AG04450 (cell line): ENCODE measurements at regions of chr3 and their contacts with region 1.

Region 1: DNA sequence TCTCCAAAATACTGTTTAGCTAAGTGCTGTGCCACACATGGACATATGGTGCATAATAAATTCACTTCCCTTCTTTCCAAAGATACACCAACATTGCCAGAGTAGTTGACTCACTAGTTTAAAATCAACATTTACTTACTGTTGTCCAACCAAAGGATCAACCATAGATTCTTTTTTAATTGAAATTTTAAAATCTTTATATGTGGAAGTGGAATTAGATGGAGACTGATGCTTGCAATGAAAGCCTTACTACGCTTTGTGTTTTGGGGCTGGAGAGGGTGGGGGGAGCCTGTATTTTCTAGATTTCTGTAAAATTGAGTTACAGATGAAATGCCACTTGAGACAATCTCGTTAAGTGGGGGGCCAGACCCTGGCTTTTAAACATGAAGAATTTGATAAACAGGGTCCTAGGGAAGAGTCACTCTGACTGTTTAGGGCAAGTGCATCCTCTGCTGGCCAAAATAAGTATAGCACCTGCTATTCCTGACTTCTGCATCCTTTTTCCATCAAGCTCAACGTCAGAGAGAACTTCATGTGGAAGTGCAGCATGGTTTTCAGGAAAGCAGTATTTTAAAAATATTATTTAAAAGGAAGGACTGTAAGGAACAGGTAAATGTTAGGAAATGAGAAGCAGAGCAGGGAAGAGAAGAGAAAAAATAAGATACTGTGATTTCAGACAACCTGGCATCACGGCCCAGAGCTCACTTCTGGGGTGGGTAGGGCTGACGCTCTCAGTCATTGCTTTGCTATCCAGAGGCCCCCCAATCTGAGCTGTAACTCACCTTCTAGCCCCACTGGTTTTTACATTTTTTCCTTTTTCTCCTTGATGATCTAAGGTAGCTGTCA is 76.7 kb downstream of the BOC start:
- DNase-seq: peak; percentile 53
- H3K4me3 ChIP-seq: no peak overlapping the region
- H3K27ac ChIP-seq: no peak overlapping the region
- H3K27me3 ChIP-seq: no peaks in the 10 kb centered on the region
- CTCF ChIP-seq: peak; percentile 100

Region 2: DNA sequence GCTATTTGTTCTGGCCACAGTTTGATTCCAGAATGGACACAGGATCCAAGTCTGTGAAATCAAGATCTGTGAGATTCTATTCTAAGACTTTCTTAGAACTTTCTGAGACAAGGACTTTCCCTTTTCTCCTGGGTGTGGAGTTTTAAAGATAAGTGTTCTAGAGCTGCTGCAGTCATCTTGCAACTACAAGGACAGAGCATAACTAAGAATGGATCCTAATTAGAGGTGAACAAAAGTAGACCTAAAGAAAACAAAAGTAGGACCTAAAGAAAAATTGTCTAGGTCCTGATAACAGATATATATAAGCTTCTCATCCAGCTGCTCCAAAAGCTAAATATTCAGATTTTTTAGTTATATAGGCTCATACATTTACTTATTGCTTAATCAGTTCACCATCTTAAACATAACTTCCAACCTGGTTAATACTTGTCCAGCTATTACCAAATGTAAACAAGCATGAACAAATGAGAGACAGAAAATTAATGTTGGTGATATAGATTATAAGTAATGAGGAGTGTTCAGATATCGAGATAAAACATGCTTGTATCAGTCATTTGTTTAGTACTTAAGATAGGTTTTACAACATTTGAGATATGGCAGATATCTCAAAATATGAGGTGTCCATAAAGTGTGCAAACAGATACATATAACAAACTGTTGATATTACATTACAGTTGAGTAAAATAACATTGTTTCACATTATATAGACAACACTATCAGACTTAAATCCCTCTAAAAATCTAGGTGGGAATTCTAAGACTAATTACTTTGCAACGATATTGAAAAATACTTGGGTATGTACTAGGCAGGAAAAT is 879.9 kb before region 1 on chr3:
- CTCF ChIA-PET with region 1: no interaction called
- POLR2A ChIA-PET with region 1: no interaction called
- DNase-seq: no peak
- H3K4me3 ChIP-seq: no peak overlapping the region
- H3K27ac ChIP-seq: no peak overlapping the region
- H3K27me3 ChIP-seq: no peaks in the 10 kb centered on the region
- CTCF ChIP-seq: no peak

Region 3: DNA sequence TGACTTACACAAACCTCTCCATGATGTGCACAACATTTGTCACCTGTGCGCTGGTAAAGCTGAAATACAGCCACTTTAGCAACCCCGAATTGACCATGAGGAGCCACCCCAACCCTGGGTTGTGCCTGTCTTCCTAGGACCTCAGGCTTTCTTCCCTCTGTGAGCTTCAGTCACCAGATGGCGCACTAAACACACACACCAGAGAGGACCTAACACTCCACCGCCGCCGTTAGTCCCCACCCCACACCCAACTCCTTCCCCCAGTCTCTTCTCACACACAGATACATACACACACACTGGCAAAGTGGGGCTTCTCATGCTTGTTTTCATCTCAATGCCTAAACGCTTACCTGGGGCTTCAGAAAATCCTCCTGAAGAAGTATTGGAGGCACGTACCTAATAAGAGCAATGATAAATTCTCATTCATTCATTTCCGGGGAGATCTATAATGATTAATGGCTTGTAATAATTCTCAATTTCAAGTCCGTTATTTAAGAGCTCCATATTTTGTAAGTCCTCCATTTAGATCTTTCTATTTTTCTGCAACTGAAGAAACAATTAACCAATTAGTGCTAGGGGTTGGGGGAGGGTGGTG is 645.0 kb before region 1 on chr3:
- CTCF ChIA-PET with region 1: interaction called, 16 read pairs
- POLR2A ChIA-PET with region 1: no interaction called
- DNase-seq: peak; percentile 86
- H3K4me3 ChIP-seq: peak overlapping the region; percentile 28
- H3K27ac ChIP-seq: no peak overlapping the region
- H3K27me3 ChIP-seq: no peaks in the 10 kb centered on the region
- CTCF ChIP-seq: peak; percentile 96

Region 4: GRCh38 chr3:113035387-113035982 is 252.5 kb before region 1 on chr3:
- CTCF ChIA-PET with region 1: interaction called, 32 read pairs
- POLR2A ChIA-PET with region 1: no interaction called
- DNase-seq: no peak
- H3K4me3 ChIP-seq: no peak overlapping the region
- H3K27ac ChIP-seq: no peak overlapping the region
- H3K27me3 ChIP-seq: no peaks in the 10 kb centered on the region
- CTCF ChIP-seq: peak; percentile 94

Region 5: DNA sequence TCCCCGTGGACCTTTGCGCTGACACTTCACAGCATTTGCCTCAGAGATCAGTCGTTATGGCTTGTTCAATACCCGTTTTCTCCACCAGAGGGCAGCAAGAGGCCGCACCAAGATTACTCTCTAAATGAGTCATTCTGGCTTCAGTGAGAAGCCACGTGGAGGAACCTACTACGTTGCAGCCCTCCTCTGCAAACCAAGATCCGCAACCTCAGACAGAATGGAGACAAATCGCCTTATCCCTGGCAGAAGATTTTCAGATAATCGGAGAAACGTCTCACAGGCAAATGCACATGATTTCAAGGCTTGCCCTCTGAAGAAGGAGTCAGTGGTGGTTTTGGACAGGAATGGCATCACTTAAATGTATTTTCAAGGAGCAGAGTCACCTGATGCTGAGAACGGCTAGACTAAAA is 236.7 kb before region 1 on chr3:
- CTCF ChIA-PET with region 1: interaction called, 78 read pairs
- POLR2A ChIA-PET with region 1: interaction called, 4 read pairs
- DNase-seq: peak; percentile 53
- H3K4me3 ChIP-seq: no peak overlapping the region
- H3K27ac ChIP-seq: no peak overlapping the region
- H3K27me3 ChIP-seq: no peaks in the 10 kb centered on the region
- CTCF ChIP-seq: peak; percentile 83

Region 6: GRCh38 chr3:113136071-113136470 is 152.0 kb before region 1 on chr3:
- CTCF ChIA-PET with region 1: interaction called, 39 read pairs
- POLR2A ChIA-PET with region 1: no interaction called
- DNase-seq: no peak
- H3K4me3 ChIP-seq: no peak overlapping the region
- H3K27ac ChIP-seq: no peak overlapping the region
- H3K27me3 ChIP-seq: no peaks in the 10 kb centered on the region
- CTCF ChIP-seq: peak; percentile 51

Region 7: GRCh38 chr3:113275929-113276750 is 11.9 kb before region 1 on chr3:
- CTCF ChIA-PET with region 1: interaction called, 11 read pairs
- POLR2A ChIA-PET with region 1: no interaction called
- DNase-seq: no peak
- H3K4me3 ChIP-seq: peak overlapping the region; percentile 45
- H3K27ac ChIP-seq: peak overlapping the region; percentile 61
- H3K27me3 ChIP-seq: no peaks in the 10 kb centered on the region
- CTCF ChIP-seq: 0 out of 2 replicates have a peak, but pooled peaks have one; percentile 25

Region 8: DNA sequence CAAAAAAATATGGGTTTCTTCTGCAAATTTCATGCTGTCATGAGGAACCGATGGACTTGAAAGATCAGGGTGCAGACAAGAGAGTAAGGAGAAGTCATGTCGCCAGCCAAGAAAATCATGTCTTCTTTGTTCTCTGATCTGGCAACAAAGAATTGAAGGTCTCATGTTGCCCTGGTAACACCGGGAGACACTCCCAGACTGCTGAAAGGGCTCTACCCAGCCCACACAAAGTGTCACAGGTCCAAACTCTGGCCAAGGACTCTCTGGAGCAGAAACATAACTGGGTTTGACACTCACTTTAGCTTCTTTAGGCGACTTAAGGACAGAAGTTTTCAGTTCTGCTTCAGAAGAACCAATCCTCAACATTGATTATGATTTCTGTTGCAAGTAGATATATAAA is 287.2 kb after region 1 on chr3:
- CTCF ChIA-PET with region 1: interaction called, 13 read pairs
- POLR2A ChIA-PET with region 1: no interaction called
- DNase-seq: no peak
- H3K4me3 ChIP-seq: no peak overlapping the region
- H3K27ac ChIP-seq: no peak overlapping the region
- H3K27me3 ChIP-seq: peaks cover 13% of the 10 kb centered on the region
- CTCF ChIP-seq: no peak